Heart left ventricle (tissue), 16 donors: ENCODE measurements at regions of chr11 and their contacts with region 1.

Region 1: DNA sequence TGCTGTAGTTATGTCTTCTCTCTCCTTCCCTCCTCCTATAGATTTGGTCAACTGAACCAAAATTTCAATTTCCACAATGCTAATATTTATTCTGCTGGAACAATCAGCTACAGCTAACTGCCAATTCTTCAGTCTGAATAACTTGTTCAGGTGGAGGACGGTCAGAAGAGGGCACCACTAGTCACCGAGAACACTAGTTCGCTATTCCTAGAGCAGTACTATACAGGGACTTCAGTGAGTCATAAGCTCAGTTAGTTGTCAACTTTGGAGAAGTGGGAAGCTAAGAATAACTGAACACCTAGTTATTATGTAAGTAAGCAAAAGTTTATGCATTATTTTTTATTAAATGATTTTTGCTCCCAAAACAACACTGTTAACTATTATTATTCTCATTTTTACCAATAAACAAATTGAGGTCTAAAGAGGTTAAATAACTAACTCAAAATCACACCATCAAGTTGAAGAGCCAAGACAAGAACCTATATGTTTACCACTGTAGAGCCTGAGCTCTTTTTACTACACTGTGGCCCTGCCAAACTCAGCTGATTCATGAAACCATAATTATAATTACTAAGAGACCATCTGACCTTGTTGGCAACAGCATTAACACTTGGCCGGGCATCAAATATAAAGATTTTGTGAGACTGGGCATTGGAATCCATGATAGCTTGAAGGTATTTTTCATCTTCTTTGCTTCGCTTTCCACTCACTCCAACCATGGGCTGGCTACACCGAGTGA is 59.0 kb downstream of the CEP57 start:
- DNase-seq: peak in 4 of 5 donors; percentile 40 to 50 (median 42)
- ATAC-seq: peak; percentile 78 to 98 (median 95)
- H3K4me3 ChIP-seq: no peak overlapping the region
- H3K27ac ChIP-seq: peak overlapping the region in 6 of 12 donors; percentile 3 to 40 (median 10)
- H3K4me1 ChIP-seq: peaks cover 0 to 8% (median 2%) of the 10 kb centered on the region in 12 donors
- H3K27me3 ChIP-seq: no peaks in the 10 kb centered on the region
- CTCF ChIP-seq: peak; percentile 31 to 69 (median 52)
- POLR2A ChIP-seq: no peak

Region 2: DNA sequence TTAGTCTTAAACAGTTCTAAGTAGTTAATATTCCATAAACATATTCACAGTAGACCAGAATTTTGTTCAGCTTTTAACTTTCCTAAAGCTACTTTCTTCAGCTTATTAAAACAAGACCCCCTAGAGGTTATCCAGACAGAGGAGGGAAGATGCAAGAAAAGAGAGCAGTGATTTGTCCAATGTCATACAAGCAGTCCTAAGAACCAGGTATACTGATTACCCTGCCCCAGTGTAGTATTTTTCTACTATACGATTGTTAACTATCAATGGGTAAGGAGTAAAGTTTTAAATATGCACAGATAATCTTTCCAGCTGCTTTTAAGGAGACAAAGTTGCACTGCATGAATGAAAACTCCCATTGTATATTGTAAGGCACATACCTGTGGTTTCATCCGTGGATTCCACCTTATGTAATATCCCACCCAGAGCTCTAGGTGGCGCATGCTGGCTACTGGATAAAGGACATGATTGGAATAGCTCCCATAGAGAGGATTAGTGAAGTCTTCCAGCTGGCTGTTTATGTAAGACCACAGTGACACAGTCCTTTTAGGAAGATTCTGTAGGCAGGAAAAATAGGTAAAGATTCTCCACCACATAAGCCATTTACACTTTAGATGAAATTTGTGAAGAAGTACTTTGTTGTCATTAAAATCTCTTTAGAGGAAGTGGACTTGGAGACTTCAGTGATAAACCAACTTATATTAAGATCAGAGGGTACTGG is 13.3 kb before region 1 on chr11:
- intact Hi-C with region 1: no loop called
- DNase-seq: peak; percentile 36 to 60 (median 48)
- ATAC-seq: peak; percentile 83 to 97 (median 95)
- H3K4me3 ChIP-seq: no peak overlapping the region
- H3K27ac ChIP-seq: peak overlapping the region in 3 of 12 donors; percentile 27 to 59 (median 29)
- H3K4me1 ChIP-seq: peaks cover 0 to 11% (median 0%) of the 10 kb centered on the region in 12 donors
- H3K27me3 ChIP-seq: no peaks in the 10 kb centered on the region
- CTCF ChIP-seq: peak; percentile 76 to 93 (median 87)
- POLR2A ChIP-seq: no peak

Region 3: GRCh38 chr11:95897731-95898130 is 48.5 kb after region 1 on chr11:
- intact Hi-C with region 1: no loop called
- DNase-seq: no peak
- ATAC-seq: no peak
- H3K4me3 ChIP-seq: no peak overlapping the region
- H3K27ac ChIP-seq: no peak overlapping the region
- H3K4me1 ChIP-seq: peaks cover 0 to 59% (median 0%) of the 10 kb centered on the region in 12 donors
- H3K27me3 ChIP-seq: no peaks in the 10 kb centered on the region
- CTCF ChIP-seq: no peak
- POLR2A ChIP-seq: no peak

Region 4: DNA sequence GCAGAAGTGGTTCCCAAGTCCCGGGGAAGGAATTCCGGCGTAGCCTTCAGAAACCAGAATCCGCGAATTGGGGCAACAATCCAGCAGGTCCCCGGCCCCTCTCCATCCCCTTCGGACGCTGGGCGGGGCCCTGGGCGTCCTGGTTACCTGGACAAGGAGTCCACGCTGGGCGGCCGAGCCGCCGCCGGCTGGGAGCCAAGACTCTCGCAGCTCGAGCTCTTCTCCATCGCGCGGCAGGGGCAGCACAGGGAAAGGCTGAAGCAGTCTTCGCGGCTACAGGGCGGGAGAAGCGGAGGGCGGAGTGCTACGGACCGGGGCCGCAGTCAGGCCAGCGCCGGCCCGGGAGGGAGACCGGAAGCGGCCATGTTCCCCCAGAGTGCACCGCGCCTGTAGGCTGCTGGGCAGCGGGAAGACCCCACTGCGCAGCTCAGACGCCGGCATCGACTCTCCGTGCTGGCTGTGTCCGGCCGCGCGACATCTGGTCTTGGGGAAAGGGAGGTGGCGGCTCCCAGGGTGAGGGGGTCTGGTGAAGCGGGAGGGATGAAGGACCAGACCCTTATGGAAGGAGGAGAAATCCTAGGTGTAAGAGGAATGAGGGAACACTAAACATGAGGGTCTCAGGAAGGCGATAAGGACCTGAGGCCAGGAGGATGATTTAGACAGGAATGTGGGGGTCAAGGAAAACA is 74.6 kb after region 1 on chr11 and contains the start of gene MTMR2:
- intact Hi-C with region 1: loop called in 2 of 10 experiments (anchors 5 to 10 kb)
- DNase-seq: peak; percentile 83 to 90 (median 85)
- ATAC-seq: peak; percentile 98 to 100 (median 100)
- H3K4me3 ChIP-seq: peak within 1 kb of the TSS; percentile 68 to 93 (median 86)
- H3K27ac ChIP-seq: peak within 1 kb of the TSS; percentile 87 to 98 (median 95)
- H3K4me1 ChIP-seq: peaks cover 0 to 40% (median 23%) of the 10 kb centered on the region in 12 donors
- H3K27me3 ChIP-seq: no peaks in the 10 kb centered on the region
- CTCF ChIP-seq: peak in 1 of 12 donors; percentile 12
- POLR2A ChIP-seq: peak in 1 of 2 donors; percentile 67
- total RNA-seq, gene MTMR2: 13.1 to 23.9 (median 18.8) TPM

Region 5: DNA sequence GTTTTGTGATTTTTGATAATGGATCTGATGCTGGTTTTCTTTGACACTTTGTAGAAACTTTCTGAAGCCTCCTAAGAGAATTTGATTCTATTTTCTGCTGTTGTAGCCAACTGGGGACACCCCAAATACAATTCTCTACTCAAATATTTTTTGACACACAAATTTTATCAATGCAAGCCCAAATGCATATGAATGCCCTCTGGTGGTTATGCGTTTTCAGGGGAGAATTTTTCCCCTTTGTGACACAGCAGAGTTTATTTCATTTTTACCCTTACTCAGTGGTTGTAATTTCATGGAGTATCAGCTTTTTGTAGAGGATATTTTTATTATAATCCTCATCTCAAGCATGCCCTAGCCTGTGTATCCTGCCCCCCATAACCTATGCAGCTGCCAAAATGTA is 119.3 kb after region 1 on chr11:
- intact Hi-C with region 1: loop called in 1 of 10 experiments (anchors 10 kb)
- DNase-seq: no peak
- ATAC-seq: no peak
- H3K4me3 ChIP-seq: no peak overlapping the region
- H3K27ac ChIP-seq: no peak overlapping the region
- H3K4me1 ChIP-seq: no peaks in the 10 kb centered on the region
- H3K27me3 ChIP-seq: no peaks in the 10 kb centered on the region
- CTCF ChIP-seq: peak in 3 of 12 donors; percentile 8 to 28 (median 22)
- POLR2A ChIP-seq: no peak

Region 6: DNA sequence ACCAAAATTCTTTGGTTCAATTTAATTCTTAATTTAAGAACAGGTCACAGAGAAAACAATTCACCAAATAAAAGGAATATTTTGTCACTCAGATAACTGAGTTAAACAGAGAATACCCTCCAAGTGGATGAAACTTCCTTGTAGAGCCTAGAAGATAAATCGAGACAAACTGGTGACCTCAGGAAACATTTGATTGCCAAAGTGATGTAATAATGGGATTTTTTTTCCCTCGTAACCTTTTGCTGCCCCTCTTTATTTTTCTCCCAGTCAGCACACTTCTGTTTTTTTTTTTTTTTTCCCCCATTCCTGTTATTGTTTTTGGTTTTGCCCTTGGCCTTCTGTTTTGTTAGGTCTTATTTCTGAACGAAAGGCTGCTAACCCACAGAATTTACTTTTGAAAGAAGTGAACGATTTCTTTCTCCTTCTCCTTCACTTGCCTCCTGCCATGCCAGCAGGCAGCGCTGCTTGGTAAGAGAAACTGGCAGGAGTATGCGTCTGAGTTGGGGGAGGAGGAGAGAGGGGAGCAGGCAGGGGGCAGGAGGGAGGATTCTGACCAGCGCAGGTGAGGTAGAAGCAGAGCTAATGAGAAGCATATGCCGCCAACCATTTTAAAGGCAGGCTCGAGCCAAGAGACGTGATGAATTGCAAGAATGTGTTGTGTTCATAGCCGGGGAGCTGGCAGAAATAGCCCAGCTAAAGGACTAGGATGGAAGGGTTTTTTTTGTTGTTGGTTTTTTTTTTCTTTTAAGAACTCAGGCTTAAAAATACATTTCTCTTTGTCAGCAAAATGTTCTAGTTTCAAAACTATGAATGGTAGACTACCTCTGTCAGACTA is 196.6 kb after region 1 on chr11:
- intact Hi-C with region 1: loop called in 1 of 10 experiments (anchors 10 kb)
- DNase-seq: peak in 4 of 5 donors; percentile 19 to 44 (median 30)
- ATAC-seq: peak in 3 of 4 donors; percentile 68 to 79 (median 70)
- H3K4me3 ChIP-seq: peak overlapping the region in 8 of 12 donors; percentile 14 to 42 (median 27)
- H3K27ac ChIP-seq: peak overlapping the region in 8 of 12 donors; percentile 7 to 70 (median 43)
- H3K4me1 ChIP-seq: peaks cover 0 to 32% (median 9%) of the 10 kb centered on the region in 12 donors
- H3K27me3 ChIP-seq: no peaks in the 10 kb centered on the region
- CTCF ChIP-seq: peak in 4 of 12 donors; percentile 23 to 37 (median 28)
- POLR2A ChIP-seq: no peak